AG04450 (cell line): ENCODE measurements at regions of chr2 and their contacts with region 1.

Region 1: DNA sequence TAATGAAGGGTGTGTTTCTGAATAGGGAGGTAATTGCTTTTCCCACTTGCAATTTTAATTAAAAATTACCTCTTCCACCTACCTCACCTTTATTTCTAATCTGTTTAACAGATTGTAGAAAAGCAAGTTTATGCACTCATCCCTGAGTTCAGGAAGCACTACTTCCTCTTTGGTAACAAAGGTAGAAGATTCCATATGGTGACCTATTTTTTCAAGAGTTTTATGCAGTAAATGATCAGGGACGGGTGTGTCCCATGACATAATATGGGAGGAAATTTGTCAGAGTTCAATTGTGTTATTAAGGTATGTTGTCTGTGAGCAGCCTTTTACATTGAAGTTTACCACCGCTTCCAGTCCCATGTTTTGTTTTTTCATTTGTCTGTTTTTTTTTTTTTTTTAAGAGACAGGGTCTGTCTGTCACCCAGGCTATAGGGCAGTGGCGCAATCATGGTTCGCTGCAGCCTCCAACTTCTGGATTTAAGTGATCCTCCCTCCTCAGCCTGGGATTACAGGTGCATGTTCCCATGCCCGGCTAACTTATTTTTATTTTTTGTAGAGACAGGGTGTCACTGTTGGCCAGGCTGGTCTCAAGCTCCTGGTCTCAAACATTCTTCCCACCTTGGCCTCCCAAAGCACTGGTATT is 68.2 kb downstream of the ASAP2 start:
- DNase-seq: no peak
- H3K4me3 ChIP-seq: no peak overlapping the region
- H3K27ac ChIP-seq: no peak overlapping the region
- H3K27me3 ChIP-seq: no peaks in the 10 kb centered on the region
- CTCF ChIP-seq: no peak

Region 2: DNA sequence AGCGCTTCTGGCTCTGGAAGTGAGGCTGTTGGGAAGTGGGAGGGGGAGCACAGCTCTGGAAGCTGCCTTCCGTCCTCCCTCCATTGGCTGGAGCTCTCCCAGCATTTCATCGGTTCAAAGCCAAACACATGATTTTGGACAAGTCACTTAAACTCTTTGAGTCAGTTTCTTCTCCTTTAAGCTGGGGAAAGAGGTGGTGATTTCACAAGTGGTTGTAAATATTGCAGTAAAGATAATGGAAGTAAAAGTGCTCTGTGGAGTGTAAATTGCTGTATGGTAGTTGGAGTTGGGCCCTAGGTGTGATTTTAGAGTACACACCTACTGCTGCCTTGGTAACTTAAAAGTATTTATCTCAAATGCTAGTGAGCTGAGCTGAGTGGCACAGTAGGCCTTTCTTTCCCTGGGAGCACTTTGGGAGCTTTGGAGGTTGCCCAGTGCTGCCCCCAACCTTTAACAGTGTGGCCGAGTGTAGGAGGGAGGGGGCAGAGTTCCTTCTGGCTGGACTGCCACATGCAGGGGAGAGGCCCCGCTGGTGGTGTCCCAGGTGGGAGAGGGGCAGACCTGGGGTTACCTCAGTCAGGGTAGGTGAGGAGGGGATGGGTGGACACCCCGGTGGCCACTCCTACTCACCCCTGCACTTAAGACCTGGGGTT is 13.5 kb before region 1 on chr2:
- CTCF ChIA-PET with region 1: no interaction called
- POLR2A ChIA-PET with region 1: no interaction called
- DNase-seq: no peak
- H3K4me3 ChIP-seq: no peak overlapping the region
- H3K27ac ChIP-seq: no peak overlapping the region
- H3K27me3 ChIP-seq: no peaks in the 10 kb centered on the region
- CTCF ChIP-seq: no peak

Region 3: GRCh38 chr2:9287400-9288043 is 12.7 kb after region 1 on chr2:
- CTCF ChIA-PET with region 1: interaction called, 4 read pairs
- POLR2A ChIA-PET with region 1: interaction called, 11 read pairs
- DNase-seq: peak; percentile 89
- H3K4me3 ChIP-seq: no peak overlapping the region
- H3K27ac ChIP-seq: peak overlapping the region; percentile 94
- H3K27me3 ChIP-seq: no peaks in the 10 kb centered on the region
- CTCF ChIP-seq: no peak